Activated CD4-positive, alpha-beta T cell treated with anti-CD3 and anti-CD28 coated beads, Interleukin-2, amount 10 ng/mL, durations not matched to agents 24 days and 14 days (primary cell): ENCODE measurements at regions of chr19 and their contacts with region 1.

Region 1: GRCh38 chr19:6862673-6863078 is 24.7 kb upstream of the ADGRE1 start:
- DNase-seq: peak; percentile 97
- H3K4me3 Mint-ChIP-seq: peak overlapping the region; percentile 84
- H3K27ac Mint-ChIP-seq: peak overlapping the region; percentile 68
- H3K4me1 Mint-ChIP-seq: peaks cover 17% of the 10 kb centered on the region
- H3K27me3 Mint-ChIP-seq: no peaks in the 10 kb centered on the region

Region 2: GRCh38 chr19:6632002-6632621 is 230.6 kb before region 1 on chr19:
- intact Hi-C with region 1: loop called (anchors 1 kb)
- DNase-seq: peak; percentile 96
- H3K4me3 Mint-ChIP-seq: no peak overlapping the region
- H3K27ac Mint-ChIP-seq: no peak overlapping the region
- H3K4me1 Mint-ChIP-seq: peaks cover 26% of the 10 kb centered on the region
- H3K27me3 Mint-ChIP-seq: peaks cover 2% of the 10 kb centered on the region

Region 3: DNA sequence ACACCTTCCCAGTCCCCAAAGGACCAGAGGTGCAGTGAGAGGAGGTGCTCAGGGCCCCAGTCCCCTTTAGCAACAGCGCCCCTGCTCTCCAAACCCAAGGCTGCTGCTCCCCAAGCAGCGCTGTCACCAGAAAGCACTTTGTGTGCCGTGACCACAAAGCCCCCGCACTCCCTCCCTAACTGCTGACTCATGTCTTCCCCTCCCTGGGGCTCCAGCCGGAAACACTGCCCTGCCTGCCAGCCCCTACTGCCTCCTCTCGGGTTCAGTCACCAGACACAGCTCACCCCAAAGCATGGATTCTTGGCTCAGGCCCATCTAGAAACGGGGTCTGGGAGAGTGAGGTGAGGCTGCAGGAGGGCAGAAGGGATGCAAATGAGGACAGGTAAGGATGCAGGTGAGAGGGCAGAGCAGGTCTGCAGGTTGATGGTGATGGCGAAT is 187.8 kb before region 1 on chr19:
- intact Hi-C with region 1: loop called (anchors 1 kb)
- DNase-seq: peak; percentile 95
- H3K4me3 Mint-ChIP-seq: peak overlapping the region; percentile 71
- H3K27ac Mint-ChIP-seq: peak overlapping the region; percentile 93
- H3K4me1 Mint-ChIP-seq: peaks cover 67% of the 10 kb centered on the region
- H3K27me3 Mint-ChIP-seq: peaks cover 3% of the 10 kb centered on the region

Region 4: GRCh38 chr19:6801485-6802086 is 61.1 kb before region 1 on chr19:
- intact Hi-C with region 1: loop called (anchors 2 kb)
- DNase-seq: peak; percentile 93
- H3K4me3 Mint-ChIP-seq: peak overlapping the region; percentile 93
- H3K27ac Mint-ChIP-seq: peak overlapping the region; percentile 99
- H3K4me1 Mint-ChIP-seq: peaks cover 55% of the 10 kb centered on the region
- H3K27me3 Mint-ChIP-seq: no peaks in the 10 kb centered on the region

Region 5: DNA sequence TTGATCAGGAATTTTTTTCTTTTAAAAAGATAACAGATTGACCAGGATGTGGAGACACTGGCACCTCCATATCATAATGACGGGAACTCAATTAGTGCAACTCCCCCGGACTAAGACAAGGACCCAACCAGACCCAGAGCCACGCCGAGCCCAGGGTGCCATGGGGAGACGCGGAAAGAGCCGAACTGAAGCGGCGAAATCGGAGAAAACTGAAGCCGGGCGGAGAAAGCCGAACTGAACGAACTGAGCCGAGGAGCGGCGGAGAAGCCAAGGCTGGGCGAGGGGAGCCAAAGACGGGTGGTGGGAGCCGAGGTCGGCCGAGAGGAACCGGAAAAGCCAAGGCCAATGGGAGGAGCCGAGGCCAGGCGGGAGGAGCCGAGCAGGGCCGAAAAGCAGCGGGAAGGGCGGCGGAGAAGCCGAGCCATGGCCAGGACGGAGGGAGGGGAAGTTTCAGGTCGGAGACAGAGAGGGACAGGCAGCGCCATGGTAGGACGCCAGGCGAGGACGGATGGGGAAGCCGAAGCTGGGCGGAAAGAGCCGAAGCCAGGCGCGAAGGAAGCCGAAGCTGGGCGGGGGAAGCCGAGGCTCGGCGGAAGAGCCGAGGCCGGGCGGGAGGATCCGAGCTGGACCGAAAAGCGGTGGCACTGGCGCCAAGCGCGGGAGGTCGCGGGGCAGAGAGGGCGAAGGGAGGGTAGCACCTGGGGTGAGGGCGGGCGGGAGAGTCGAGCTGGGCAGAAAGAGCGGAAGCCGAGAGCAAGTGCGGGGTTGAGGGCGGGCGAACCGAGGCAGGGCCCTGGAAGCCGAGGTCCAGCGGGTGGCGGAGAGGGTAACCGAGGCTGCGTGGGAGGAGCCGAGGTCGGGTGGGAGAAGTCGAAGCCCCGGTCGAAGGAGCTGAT is 236.3 kb after region 1 on chr19:
- intact Hi-C with region 1: no loop called
- DNase-seq: peak; percentile 96
- H3K4me3 Mint-ChIP-seq: peak overlapping the region; percentile 92
- H3K27ac Mint-ChIP-seq: peak overlapping the region; percentile 92
- H3K4me1 Mint-ChIP-seq: peaks cover 24% of the 10 kb centered on the region
- H3K27me3 Mint-ChIP-seq: peaks cover 3% of the 10 kb centered on the region